MCF 10A (cell line): ENCODE measurements at regions of chr5 and their contacts with region 1.

Region 1: DNA sequence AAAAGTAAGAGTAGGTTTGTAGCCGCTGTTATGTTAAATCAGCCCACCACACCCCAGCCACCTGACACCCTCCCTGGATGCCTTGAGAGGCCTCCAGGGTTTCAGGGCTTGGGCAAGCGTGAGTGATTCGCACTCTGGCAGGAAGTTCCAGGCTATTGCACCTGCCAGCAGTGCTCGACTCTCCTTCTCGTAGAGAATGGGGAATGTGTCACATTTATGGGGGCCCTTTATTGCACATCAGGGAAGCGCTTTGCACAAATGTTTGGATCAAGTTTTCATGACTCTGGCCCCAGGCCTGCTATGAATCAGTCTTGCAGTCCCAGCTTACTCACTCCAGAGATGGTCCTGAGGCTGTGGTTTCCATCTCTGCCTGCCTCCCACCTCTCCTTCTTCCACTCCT is 66.1 kb upstream of the ADRA1B start:
- DNase-seq: peak; percentile 94
- H3K4me3 Mint-ChIP-seq: no peak overlapping the region
- H3K27ac Mint-ChIP-seq: peak overlapping the region; percentile 65
- H3K4me1 Mint-ChIP-seq: peaks cover 18% of the 10 kb centered on the region
- H3K27me3 Mint-ChIP-seq: no peaks in the 10 kb centered on the region
- CTCF ChIP-seq: no peak

Region 2: DNA sequence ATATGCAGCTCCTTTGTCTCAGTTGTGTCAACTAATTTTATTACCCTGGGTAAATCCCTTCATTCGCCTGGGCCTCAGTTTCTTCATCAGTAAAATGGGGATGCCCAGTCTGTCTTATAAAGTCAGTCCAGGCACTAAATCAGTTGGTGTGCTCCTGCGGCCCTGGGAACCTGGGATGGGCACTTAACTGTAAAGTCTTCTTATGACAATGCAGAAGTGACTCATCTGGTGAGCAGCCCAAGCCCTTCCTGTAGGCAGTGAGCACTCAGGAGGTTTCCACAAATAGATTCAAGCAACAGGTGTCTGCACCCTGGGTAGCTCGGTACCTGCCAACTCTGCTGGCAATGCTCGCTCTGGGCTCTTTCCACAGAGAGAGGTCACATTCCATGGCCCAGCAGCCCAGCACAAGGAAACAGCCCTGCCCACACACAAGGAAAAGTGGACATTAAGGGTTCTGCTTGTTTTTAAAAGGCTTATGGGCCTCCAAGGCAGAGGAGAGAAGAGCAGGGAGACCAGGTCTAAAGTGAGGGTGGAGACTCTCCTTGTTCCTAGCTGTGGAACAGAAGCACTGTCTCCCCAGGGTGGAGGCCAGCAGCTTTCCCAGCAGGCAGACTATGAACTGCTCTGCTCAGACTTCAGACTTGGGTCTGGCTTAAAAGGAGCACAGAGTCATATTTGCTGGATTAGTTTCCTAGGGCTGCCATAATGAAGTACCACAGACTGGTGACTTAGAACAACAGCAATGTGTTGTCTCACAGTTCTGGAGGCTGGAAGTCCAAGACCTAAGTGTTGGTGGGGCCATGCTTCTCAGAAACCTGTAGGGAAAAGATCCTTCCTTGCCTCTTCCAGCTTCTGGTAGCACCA is 23.6 kb before region 1 on chr5:
- CTCF ChIA-PET with region 1: no interaction called
- POLR2A ChIA-PET with region 1: no interaction called
- intact Hi-C with region 1: loop called (anchors 2 kb)
- DNase-seq: peak; percentile 98
- H3K4me3 Mint-ChIP-seq: peak overlapping the region; percentile 5
- H3K27ac Mint-ChIP-seq: peak overlapping the region; percentile 70
- H3K4me1 Mint-ChIP-seq: peaks cover 35% of the 10 kb centered on the region
- H3K27me3 Mint-ChIP-seq: no peaks in the 10 kb centered on the region
- CTCF ChIP-seq: no peak

Region 3: GRCh38 chr5:159928122-159928909 is 78.2 kb after region 1 on chr5:
- CTCF ChIA-PET with region 1: no interaction called
- POLR2A ChIA-PET with region 1: no interaction called
- intact Hi-C with region 1: loop called (anchors 2 kb)
- DNase-seq: peak; percentile 94
- H3K4me3 Mint-ChIP-seq: peak overlapping the region; percentile 44
- H3K27ac Mint-ChIP-seq: peak overlapping the region; percentile 33
- H3K4me1 Mint-ChIP-seq: peaks cover 17% of the 10 kb centered on the region
- H3K27me3 Mint-ChIP-seq: no peaks in the 10 kb centered on the region
- CTCF ChIP-seq: no peak

Region 4: GRCh38 chr5:160008877-160009590 is 158.9 kb after region 1 on chr5 and contains the start of gene TTC1:
- CTCF ChIA-PET with region 1: no interaction called
- POLR2A ChIA-PET with region 1: no interaction called
- intact Hi-C with region 1: no loop called
- DNase-seq: peak; percentile 100
- H3K4me3 Mint-ChIP-seq: peak within 1 kb of the TSS; percentile 92
- H3K27ac Mint-ChIP-seq: peak within 1 kb of the TSS; percentile 98
- H3K4me1 Mint-ChIP-seq: peaks cover 19% of the 10 kb centered on the region
- H3K27me3 Mint-ChIP-seq: no peaks in the 10 kb centered on the region
- CTCF ChIP-seq: no peak
- total RNA-seq, gene TTC1: 84.6 and 100 TPM in 2 replicates